ENCODE measurements at regions of chr19 and their contacts with region 1.

Region 1: DNA sequence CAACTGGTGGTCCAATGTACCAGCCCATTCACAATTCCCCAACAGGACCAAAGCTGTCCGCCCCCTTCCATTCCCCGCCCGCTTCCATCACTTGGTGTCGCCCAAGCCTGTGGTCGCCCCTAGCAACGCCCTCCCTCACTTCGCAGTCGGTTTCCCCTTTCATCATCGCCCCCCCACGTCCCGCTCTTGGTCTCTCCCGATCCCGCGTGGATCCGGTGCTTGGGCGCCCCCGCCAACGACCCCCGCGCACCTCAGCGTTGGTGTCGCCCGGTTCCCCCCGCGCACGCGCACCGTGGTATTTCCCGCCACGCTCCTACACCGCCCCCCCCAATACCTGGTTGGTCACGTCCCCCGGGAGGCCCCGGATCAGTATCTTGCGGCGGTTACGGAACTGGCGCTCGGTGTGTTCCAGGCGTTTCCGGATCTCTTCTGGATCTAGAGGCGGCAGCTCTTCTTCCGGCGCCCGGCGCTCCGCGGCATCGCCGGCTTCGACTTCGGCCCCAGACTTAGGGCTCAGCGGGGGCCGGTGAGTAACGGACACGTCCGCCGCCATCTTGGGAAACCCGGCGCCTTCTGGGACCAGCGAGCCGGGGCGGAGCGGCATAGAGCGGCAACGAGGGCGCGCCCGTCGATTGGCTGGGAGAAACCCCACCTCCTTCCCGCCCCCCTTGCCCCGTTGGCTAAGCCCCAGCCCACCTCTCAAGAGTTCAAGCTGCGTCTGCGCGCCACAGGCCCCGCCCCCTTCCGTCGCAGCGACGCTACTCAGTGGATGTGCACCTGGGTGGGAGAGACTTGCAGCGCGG is at the start of gene RAVER1:
- DNase-seq: peak; percentile 86 to 98 (median 97)
- ATAC-seq: peak; percentile 98
- H3K4me3 ChIP-seq: peak within 1 kb of the TSS; percentile 89
- H3K4me3 Mint-ChIP-seq: peak within 1 kb of the TSS; percentile 89 to 98 (median 93)
- H3K27ac ChIP-seq: peak within 1 kb of the TSS; percentile 91
- H3K27ac Mint-ChIP-seq: peak within 1 kb of the TSS; percentile 85 to 97 (median 95)
- H3K4me1 ChIP-seq: peaks cover 17 to 31% of the 10 kb centered on the region in 2 donors
- H3K4me1 Mint-ChIP-seq: peaks cover 6 to 48% (median 33%) of the 10 kb centered on the region in 7 donors
- H3K27me3 ChIP-seq: no peaks in the 10 kb centered on the region
- H3K27me3 Mint-ChIP-seq: no peaks in the 10 kb centered on the region
- total RNA-seq, gene RAVER1: 43.2 to 81.1 (median 50.2) TPM

Region 2: DNA sequence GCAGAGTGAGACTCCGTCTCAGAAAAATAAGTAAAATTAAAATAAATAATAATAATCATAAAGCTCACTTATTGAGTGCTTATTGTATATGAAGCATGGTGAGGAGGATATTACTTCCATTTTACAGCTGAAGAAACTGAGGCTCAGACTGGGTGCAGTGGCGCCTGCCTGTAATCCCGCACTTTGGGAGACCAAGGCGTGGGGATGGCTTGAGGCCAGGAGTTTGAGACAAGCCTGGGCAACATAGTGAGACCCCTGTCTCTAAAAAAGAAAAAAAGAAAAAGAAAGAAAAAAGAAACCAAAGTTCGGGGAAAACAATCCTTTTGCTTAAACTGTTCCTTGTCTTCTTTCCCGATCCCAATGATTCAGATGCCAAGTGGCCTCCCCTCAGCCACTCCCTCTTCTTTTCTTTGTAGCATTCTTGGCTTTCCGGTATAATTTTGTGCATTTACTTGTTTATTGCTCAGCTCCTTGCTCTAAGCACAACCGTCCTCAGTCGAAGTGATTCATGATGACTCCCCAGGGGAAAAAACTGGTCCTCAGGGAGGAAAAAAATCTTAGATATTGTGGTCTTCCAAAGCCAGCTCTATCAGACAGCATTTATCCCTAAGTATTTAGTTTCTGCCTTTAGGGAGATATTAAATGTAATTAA is 212.5 kb before region 1 on chr19:
- CTCF ChIA-PET with region 1: no interaction called
- POLR2A ChIA-PET with region 1: no interaction called
- intact Hi-C with region 1: loop called in 1 of 2 experiments (anchors 5 kb)
- DNase-seq: no peak
- ATAC-seq: no peak
- H3K4me3 ChIP-seq: no peak overlapping the region
- H3K4me3 Mint-ChIP-seq: peak overlapping the region in 4 of 10 donors; percentile 15 to 42 (median 34)
- H3K27ac ChIP-seq: no peak overlapping the region
- H3K27ac Mint-ChIP-seq: no peak overlapping the region
- H3K4me1 ChIP-seq: peaks cover 10 to 25% of the 10 kb centered on the region in 2 donors
- H3K4me1 Mint-ChIP-seq: peaks cover 5 to 30% (median 15%) of the 10 kb centered on the region in 7 donors
- H3K27me3 ChIP-seq: no peaks in the 10 kb centered on the region
- H3K27me3 Mint-ChIP-seq: no peaks in the 10 kb centered on the region

Region 3: DNA sequence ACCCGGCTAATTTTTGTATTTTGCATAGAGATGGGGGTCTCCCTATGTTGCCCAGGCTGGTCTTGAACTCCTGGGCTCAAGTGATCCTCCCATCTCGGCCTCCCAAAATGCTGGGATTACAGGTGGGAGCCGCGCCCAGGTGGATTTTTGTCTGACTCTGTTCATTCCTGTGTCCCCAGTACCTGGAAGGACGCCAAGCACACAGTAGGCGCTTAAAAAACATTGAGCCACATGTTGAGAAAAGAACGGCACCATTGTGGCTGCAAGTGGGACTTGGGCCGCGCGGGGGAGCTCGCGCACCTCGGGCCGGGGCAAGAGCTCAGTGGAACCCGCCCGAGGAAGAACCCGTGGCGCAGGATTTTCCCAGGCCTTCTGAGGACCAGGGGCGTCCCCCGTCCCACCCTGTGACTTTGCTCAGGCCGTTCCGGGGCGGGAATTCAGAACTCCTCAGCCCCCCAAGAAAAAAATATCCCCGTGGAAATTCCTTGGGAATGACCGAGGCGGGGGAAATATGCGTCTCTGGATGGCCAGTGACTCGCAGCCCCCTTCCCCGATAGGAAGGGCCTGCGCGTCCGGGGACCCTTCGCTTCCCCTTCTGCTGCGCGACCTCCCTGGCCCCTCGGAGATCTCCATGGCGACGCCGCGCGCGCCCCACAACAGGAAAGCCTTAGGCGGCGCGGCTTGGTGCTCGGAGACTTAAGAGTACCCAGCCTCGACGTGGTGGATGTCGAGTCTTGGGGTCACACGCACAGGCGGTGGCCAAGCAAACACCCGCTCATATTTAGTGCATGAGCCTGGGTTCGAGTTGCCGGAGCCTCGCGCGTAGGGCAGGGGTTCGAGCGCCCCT is 63.6 kb before region 1 on chr19:
- CTCF ChIA-PET with region 1: interaction called, 4 read pairs
- POLR2A ChIA-PET with region 1: interaction called, 6 read pairs
- intact Hi-C with region 1: loop called (anchors 1 to 5 kb)
- DNase-seq: peak; percentile 69 to 92 (median 85)
- ATAC-seq: peak; percentile 68
- H3K4me3 ChIP-seq: peak overlapping the region; percentile 78
- H3K4me3 Mint-ChIP-seq: peak overlapping the region; percentile 80 to 88 (median 86)
- H3K27ac ChIP-seq: peak overlapping the region; percentile 75
- H3K27ac Mint-ChIP-seq: peak overlapping the region; percentile 79 to 96 (median 88)
- H3K4me1 ChIP-seq: peaks cover 7 to 13% of the 10 kb centered on the region in 2 donors
- H3K4me1 Mint-ChIP-seq: peaks cover 8 to 39% (median 23%) of the 10 kb centered on the region in 7 donors
- H3K27me3 ChIP-seq: no peaks in the 10 kb centered on the region
- H3K27me3 Mint-ChIP-seq: no peaks in the 10 kb centered on the region

Region 4: DNA sequence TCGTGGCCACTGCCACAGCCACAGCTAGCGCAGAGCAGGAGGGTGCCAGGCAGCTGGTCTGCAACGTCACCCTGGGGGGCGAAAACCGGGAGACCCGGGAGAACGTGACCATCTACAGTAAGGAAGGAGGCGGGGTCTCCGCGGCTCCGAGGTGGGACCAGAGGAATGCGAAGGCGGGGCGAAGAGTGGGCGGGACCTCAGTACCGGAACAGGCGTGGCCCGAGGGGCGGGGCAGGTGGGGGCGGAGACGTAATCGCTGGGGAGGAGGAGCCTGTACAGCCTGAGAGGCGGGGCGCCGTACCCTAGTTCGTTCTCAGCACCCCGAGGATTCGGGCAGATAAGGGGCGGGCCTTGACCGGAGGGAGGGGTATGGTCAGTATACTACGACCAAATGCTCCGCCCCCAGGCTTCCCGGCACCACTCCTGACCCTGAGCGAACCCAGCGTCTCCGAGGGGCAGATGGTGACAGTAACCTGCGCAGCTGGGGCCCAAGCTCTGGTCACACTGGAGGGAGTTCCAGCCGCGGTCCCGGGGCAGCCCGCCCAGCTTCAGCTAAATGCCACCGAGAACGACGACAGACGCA is 40.9 kb before region 1 on chr19:
- CTCF ChIA-PET with region 1: no interaction called
- POLR2A ChIA-PET with region 1: interaction called, 4 read pairs
- intact Hi-C with region 1: loop called (anchors 1 to 2 kb)
- DNase-seq: peak in 8 of 9 donors; percentile 49 to 85 (median 54)
- ATAC-seq: peak; percentile 74
- H3K4me3 ChIP-seq: peak overlapping the region; percentile 54
- H3K4me3 Mint-ChIP-seq: peak overlapping the region; percentile 70 to 87 (median 80)
- H3K27ac ChIP-seq: no peak overlapping the region
- H3K27ac Mint-ChIP-seq: peak overlapping the region in 4 of 9 donors; percentile 34 to 88 (median 68)
- H3K4me1 ChIP-seq: peaks cover 62 to 66% of the 10 kb centered on the region in 2 donors
- H3K4me1 Mint-ChIP-seq: peaks cover 44 to 71% (median 60%) of the 10 kb centered on the region in 7 donors
- H3K27me3 ChIP-seq: peaks cover 8 to 55% of the 10 kb centered on the region in 2 donors
- H3K27me3 Mint-ChIP-seq: peaks cover 43 to 81% (median 52%) of the 10 kb centered on the region in 5 donors

Region 5: GRCh38 chr19:10346509-10346908 is 13.4 kb after region 1 on chr19:
- CTCF ChIA-PET with region 1: no interaction called
- POLR2A ChIA-PET with region 1: interaction called, 11 read pairs
- intact Hi-C with region 1: no loop called
- DNase-seq: no peak
- ATAC-seq: peak; percentile 88
- H3K4me3 ChIP-seq: no peak overlapping the region
- H3K4me3 Mint-ChIP-seq: no peak overlapping the region
- H3K27ac ChIP-seq: no peak overlapping the region
- H3K27ac Mint-ChIP-seq: no peak overlapping the region
- H3K4me1 ChIP-seq: no peaks in the 10 kb centered on the region
- H3K4me1 Mint-ChIP-seq: no peaks in the 10 kb centered on the region
- H3K27me3 ChIP-seq: no peaks in the 10 kb centered on the region
- H3K27me3 Mint-ChIP-seq: no peaks in the 10 kb centered on the region

Region 6: GRCh38 chr19:10960314-10961072 is 627.3 kb after region 1 on chr19 and contains the start of gene SMARCA4:
- CTCF ChIA-PET with region 1: no interaction called
- POLR2A ChIA-PET with region 1: no interaction called
- intact Hi-C with region 1: loop called in 1 of 2 experiments (anchors 2 kb)
- DNase-seq: peak; percentile 96 to 100 (median 99)
- ATAC-seq: peak; percentile 96
- H3K4me3 ChIP-seq: peak within 1 kb of the TSS; percentile 89
- H3K4me3 Mint-ChIP-seq: peak within 1 kb of the TSS; percentile 84 to 94 (median 90)
- H3K27ac ChIP-seq: peak within 1 kb of the TSS; percentile 89
- H3K27ac Mint-ChIP-seq: peak within 1 kb of the TSS; percentile 79 to 94 (median 93)
- H3K4me1 ChIP-seq: peaks cover 28 to 33% of the 10 kb centered on the region in 2 donors
- H3K4me1 Mint-ChIP-seq: peaks cover 22 to 42% (median 34%) of the 10 kb centered on the region in 7 donors
- H3K27me3 ChIP-seq: no peaks in the 10 kb centered on the region
- H3K27me3 Mint-ChIP-seq: no peaks in the 10 kb centered on the region
- total RNA-seq, gene SMARCA4: 96.0 to 126 (median 104) TPM